ENCODE measurements at regions of chr11 and their contacts with region 1.

Region 1: GRCh38 chr11:9384535-9385303 is at the start of gene IPO7:
- H3K4me3 ChIP-seq: peak within 1 kb of the TSS; percentile 88
- H3K27ac ChIP-seq: peak within 1 kb of the TSS; percentile 84
- H3K4me1 ChIP-seq: no peaks in the 10 kb centered on the region
- CTCF ChIP-seq: peak; percentile 72

Region 2: GRCh38 chr11:9314291-9315036 is 70.3 kb before region 1 on chr11 and contains the start of gene TMEM41B:
- CTCF ChIA-PET with region 1: interaction called, 4 read pairs
- POLR2A ChIA-PET with region 1: interaction called, 11 read pairs
- H3K4me3 ChIP-seq: peak within 1 kb of the TSS; percentile 99
- H3K27ac ChIP-seq: peak within 1 kb of the TSS; percentile 65
- H3K4me1 ChIP-seq: no peaks in the 10 kb centered on the region
- CTCF ChIP-seq: no peak; the same call in none of the 2 replicates

Region 3: DNA sequence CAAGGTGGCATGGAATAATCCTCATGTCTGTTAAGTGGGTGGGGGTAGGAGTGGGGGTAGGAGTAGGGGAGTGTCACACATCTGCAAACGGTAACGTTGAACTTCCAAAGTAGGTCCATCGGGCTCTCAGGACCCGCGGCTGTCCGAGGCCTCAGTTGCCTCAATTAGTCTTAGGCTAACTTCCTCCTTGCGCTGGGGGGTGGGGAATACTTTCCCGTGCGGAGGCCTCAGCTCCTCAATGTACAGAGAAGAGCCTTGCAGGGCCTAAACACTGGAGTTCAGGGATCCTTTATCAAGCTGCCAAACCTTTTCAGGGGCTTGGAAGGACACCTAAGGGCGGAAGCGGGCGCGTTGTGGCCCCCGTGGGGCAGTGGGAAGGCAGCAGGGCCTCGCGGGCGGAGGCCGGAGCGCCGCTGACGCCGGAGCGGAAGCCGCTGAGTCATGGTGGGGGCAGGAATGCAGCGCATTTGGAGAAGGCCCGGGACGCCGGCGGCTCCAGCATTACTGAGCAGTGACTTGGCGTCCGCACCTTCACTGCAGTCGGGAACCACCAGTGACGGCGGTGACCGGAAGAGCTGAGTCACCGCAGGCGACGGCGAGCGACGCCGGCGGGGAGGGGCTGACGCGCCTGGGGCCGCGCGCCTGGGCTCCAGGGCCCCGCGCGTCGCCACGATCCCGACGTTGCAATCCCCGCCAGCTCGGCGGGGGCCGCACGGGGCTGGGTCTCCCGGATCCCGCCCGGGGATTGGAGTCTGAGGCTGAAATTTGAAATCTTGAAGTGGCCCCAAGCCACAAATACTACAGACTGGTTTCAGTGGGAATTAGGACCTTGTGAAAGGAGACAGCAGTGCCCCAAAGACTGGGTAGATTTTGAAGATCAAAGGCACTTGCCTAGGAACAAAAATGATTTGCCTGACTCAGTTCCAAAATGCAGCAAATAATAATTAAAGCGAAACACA is 20.5 kb before region 1 on chr11:
- CTCF ChIA-PET with region 1: interaction called, 6 read pairs
- POLR2A ChIA-PET with region 1: interaction called, 23 read pairs
- H3K4me3 ChIP-seq: peak overlapping the region; percentile 57
- H3K27ac ChIP-seq: peak overlapping the region; percentile 85
- H3K4me1 ChIP-seq: no peaks in the 10 kb centered on the region
- CTCF ChIP-seq: peak; percentile 42; the same call in 1 of the 2 replicates

Region 4: GRCh38 chr11:9396752-9397151 is 12.0 kb after region 1 on chr11:
- CTCF ChIA-PET with region 1: interaction called, 4 read pairs
- POLR2A ChIA-PET with region 1: interaction called, 11 read pairs
- H3K4me3 ChIP-seq: no peak overlapping the region
- H3K27ac ChIP-seq: no peak overlapping the region
- H3K4me1 ChIP-seq: peaks cover 2% of the 10 kb centered on the region; the same call in 1 of the 2 replicates
- CTCF ChIP-seq: no peak

Region 5: GRCh38 chr11:9428706-9429105 is 44.0 kb after region 1 on chr11:
- CTCF ChIA-PET with region 1: no interaction called
- POLR2A ChIA-PET with region 1: no interaction called
- H3K4me3 ChIP-seq: no peak overlapping the region
- H3K27ac ChIP-seq: no peak overlapping the region
- H3K4me1 ChIP-seq: no peaks in the 10 kb centered on the region
- CTCF ChIP-seq: no peak

Region 6: DNA sequence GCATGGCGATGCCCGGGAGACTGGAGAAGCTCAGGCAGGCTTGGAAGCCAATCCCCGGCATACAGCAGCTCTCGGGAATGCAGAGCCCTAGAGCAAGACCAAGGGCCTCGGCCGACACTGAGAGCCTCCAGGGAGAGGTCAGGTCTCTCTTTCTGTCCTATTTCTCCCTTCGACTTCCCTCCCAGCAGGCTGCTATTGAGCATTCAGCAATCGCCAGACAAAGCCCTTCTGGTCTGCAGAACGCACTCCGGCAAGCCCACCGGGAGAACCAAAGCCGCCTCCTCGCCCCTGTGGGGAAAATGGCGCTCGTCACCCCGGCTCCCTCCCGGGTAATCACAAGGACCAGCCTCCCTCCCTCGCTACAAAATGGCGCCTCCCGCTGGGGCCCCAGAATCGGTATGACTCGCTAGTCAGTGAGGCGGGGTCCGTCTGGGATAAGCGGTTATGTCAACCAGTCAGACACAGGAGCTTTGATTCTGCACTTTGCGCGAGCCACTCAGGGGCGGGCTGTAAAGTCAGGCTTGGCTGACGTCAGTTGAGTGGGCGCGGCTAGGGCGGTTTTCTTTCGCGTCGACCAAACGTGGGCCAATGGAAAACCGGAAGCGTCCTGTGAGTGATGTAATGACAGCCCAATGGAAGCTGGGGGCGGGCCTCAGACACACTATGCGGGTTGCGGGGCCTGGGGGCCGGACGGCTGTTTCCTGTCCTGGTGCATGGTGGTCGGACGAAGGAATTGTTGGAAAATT is 75.8 kb after region 1 on chr11 and contains the start of gene ZNF143:
- CTCF ChIA-PET with region 1: interaction called, 3 read pairs
- POLR2A ChIA-PET with region 1: interaction called, 32 read pairs
- H3K4me3 ChIP-seq: peak within 1 kb of the TSS; percentile 93
- H3K27ac ChIP-seq: peak within 1 kb of the TSS; percentile 88
- H3K4me1 ChIP-seq: no peaks in the 10 kb centered on the region
- CTCF ChIP-seq: no peak

Region 7: DNA sequence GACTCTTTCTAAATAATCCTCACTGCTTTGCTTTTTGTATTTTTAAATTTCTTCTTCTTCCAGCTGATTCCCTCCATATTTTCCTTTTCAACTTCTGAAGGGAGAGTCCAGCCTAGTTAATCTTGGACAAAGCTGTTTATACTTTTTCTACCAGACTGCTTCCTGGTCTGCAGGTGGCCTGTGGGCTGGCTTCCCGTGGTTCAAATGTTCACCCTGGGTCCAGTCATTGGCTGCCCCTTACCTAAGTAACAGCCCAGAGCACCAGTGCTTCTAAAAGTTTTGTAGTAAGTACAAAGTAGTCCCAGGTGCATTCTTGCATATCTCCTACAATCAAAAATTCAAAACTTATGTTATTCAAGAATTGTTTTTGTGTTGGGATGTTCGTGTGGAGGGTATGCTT is 95.2 kb after region 1 on chr11:
- CTCF ChIA-PET with region 1: no interaction called
- POLR2A ChIA-PET with region 1: no interaction called
- H3K4me3 ChIP-seq: no peak overlapping the region
- H3K27ac ChIP-seq: no peak overlapping the region
- H3K4me1 ChIP-seq: no peaks in the 10 kb centered on the region
- CTCF ChIP-seq: no peak

Region 8: DNA sequence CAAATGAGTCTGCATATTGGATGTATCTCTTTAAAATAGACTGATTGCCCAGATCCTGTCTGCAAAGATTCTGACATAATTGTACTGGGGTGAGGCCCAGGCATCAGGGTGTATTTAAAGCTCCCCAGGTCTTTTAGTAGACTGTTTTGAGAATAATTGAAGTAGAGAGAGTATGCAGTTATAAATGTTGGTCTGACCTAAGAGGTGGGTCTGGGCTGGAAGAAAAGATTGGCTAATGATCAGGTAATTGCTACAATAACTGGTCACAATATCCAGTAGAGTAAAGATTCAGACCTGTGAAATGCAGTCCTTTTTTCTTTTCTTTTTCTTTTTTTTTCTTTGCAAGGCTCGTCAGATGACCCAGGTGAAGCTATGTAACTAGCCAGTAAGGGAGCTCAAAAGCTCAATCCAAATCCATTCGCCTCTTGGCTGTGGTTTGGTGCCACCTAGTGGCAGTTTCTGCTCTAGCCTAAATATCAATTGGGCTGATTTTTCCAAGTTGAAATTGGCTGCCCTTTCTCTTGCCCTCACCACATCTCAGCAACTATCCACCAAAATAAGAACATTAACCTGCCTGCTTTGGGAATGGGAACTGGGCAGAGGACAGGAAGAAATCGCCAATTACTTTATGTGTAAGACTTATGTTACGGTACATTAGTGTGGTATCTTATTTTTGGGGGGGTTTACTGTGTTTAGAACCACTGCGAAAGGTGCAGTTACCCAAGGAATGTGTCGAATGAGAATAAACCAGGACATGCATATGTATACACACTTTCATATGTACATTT is 122.0 kb after region 1 on chr11:
- CTCF ChIA-PET with region 1: interaction called, 10 read pairs
- POLR2A ChIA-PET with region 1: no interaction called
- H3K4me3 ChIP-seq: no peak overlapping the region
- H3K27ac ChIP-seq: no peak overlapping the region
- H3K4me1 ChIP-seq: no peaks in the 10 kb centered on the region
- CTCF ChIP-seq: peak; percentile 48; the same call in 1 of the 2 replicates